Ovary (tissue), 10 donors: ENCODE measurements at regions of chr1 and their contacts with region 1.

Region 1: GRCh38 chr1:33181921-33182341 is at the start of gene TRIM62:
- DNase-seq: peak; percentile 89 to 95 (median 92)
- H3K4me3 ChIP-seq: peak within 1 kb of the TSS; percentile 54
- H3K27ac ChIP-seq: peak within 1 kb of the TSS; percentile 26 to 63
- H3K4me1 ChIP-seq: peaks cover 6% of the 10 kb centered on the region
- H3K27me3 ChIP-seq: no peaks in the 10 kb centered on the region
- CTCF ChIP-seq: no peak
- EP300 ChIP-seq: no peak
- POLR2A ChIP-seq: peak; percentile 30
- total RNA-seq, gene TRIM62: 3.3 to 11.4 (median 7.0) TPM

Region 2: GRCh38 chr1:33050221-33051076 is 131.5 kb before region 1 on chr1:
- intact Hi-C with region 1: no loop called
- DNase-seq: no peak
- H3K4me3 ChIP-seq: no peak overlapping the region
- H3K27ac ChIP-seq: no peak overlapping the region
- H3K4me1 ChIP-seq: no peaks in the 10 kb centered on the region
- H3K27me3 ChIP-seq: no peaks in the 10 kb centered on the region
- CTCF ChIP-seq: no peak
- EP300 ChIP-seq: no peak
- POLR2A ChIP-seq: no peak

Region 3: DNA sequence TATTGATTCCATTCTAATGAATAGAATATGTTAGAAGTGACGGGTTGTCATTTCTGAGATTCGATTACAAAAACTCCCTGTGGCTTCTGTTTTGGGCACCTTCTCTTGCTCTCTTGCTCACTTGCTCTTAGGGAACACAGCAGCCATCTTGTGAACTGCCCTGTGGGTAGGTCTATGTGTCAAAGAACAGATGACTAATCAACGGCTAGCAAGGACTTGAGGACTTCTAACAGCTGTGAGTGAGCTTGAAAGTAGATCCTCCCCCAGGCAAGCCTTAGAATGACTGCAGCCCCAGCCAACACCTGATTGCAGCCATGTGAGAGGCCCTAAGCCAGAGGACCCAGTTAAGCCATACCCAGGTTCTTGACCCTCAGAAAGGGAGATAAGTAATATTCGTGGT is 51.6 kb before region 1 on chr1:
- intact Hi-C with region 1: loop called in 1 of 4 experiments (anchors 5 kb)
- DNase-seq: no peak
- H3K4me3 ChIP-seq: no peak overlapping the region
- H3K27ac ChIP-seq: no peak overlapping the region
- H3K4me1 ChIP-seq: peaks cover 8% of the 10 kb centered on the region
- H3K27me3 ChIP-seq: no peaks in the 10 kb centered on the region
- CTCF ChIP-seq: no peak
- EP300 ChIP-seq: no peak
- POLR2A ChIP-seq: no peak

Region 4: DNA sequence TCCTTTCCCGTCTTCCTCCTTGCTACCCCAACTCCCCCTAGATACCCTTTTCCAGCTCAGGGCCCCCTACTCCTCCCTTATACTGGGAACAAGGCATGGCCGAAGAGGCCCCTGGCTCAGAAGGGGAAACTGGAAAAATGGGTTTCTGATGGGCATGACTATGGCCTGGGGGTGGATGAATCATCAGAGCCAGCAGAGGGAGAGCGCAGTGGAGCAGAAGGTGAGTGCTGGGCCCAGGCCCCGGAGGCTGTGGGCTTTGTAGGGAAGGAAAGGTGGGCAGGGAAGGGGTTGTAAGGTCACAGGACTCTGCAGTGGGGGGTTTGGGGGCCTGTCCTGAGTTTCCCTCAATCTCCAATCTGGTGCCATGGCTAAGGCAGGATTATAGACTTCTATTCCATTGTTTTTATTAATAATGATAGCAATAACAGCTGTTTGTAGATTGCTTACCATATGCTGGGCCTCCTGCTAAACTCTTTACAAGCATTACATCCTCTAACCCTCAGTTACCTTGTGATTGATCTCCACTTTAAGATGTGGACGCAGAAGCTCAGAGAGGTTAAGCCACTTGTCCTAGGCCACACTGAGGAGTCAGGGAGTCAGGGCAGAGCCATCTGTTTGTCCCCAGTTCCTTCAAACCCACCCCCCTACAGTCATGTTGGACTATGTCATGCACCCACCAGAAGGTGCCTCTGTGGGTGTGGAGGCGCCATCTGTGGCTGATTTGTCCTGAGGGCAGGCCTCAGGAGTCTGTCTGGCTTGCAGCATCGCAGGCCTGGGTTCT is 38.1 kb after region 1 on chr1:
- intact Hi-C with region 1: no loop called
- DNase-seq: no peak
- H3K4me3 ChIP-seq: no peak overlapping the region
- H3K27ac ChIP-seq: no peak overlapping the region
- H3K4me1 ChIP-seq: peaks cover 3% of the 10 kb centered on the region
- H3K27me3 ChIP-seq: no peaks in the 10 kb centered on the region
- CTCF ChIP-seq: no peak
- EP300 ChIP-seq: no peak
- POLR2A ChIP-seq: no peak

Region 5: GRCh38 chr1:33257772-33258712 is 76.1 kb after region 1 on chr1:
- intact Hi-C with region 1: no loop called
- DNase-seq: peak in 1 of 5 donors; percentile 52
- H3K4me3 ChIP-seq: peak overlapping the region; percentile 44
- H3K27ac ChIP-seq: peak overlapping the region in 1 of 2 donors; percentile 28
- H3K4me1 ChIP-seq: peaks cover 20% of the 10 kb centered on the region
- H3K27me3 ChIP-seq: no peaks in the 10 kb centered on the region
- CTCF ChIP-seq: no peak
- EP300 ChIP-seq: no peak
- POLR2A ChIP-seq: no peak